A673 (cell line): ENCODE measurements at regions of chr15 and their contacts with region 1.

Region 1: DNA sequence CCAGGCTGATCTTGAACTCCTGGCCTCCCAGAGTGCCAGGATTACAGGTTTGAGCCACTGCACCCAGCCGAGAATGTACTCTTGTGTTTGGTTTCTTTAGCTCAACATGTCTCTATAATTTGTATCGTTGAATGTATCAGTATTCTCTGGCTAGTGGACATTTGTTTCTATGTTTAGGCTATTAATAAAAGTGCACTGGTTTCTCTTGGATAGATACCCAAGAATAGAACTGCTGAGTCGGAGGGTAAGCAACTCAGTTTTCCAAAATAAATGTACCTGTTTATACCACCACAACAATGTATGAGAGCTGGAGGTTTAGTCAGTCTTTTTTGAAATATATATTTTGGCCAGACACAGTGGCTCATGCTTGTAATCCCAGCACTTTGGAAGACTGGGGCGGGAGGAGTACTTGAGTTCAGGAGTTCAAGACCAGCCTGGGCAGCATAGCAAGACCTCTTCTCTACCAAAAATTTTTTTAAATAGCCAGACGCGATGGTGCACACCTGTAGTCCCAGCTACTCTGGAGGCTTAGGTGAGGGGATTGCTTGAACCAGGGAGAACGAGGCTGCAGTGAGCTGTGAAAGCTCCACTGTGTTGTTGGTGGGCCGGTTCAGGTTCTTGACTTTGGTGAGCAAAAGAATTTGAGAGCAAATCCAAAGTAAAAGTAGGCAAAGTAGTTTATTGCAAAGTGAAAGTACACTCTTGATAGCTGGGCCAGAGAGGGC is 7.7 kb upstream of the IVD start:
- DNase-seq: no peak
- H3K4me3 ChIP-seq: no peak overlapping the region
- H3K27ac ChIP-seq: no peak overlapping the region
- H3K4me1 ChIP-seq: no peaks in the 10 kb centered on the region
- H3K27me3 ChIP-seq: no peaks in the 10 kb centered on the region
- CTCF ChIP-seq: no peak

Region 2: DNA sequence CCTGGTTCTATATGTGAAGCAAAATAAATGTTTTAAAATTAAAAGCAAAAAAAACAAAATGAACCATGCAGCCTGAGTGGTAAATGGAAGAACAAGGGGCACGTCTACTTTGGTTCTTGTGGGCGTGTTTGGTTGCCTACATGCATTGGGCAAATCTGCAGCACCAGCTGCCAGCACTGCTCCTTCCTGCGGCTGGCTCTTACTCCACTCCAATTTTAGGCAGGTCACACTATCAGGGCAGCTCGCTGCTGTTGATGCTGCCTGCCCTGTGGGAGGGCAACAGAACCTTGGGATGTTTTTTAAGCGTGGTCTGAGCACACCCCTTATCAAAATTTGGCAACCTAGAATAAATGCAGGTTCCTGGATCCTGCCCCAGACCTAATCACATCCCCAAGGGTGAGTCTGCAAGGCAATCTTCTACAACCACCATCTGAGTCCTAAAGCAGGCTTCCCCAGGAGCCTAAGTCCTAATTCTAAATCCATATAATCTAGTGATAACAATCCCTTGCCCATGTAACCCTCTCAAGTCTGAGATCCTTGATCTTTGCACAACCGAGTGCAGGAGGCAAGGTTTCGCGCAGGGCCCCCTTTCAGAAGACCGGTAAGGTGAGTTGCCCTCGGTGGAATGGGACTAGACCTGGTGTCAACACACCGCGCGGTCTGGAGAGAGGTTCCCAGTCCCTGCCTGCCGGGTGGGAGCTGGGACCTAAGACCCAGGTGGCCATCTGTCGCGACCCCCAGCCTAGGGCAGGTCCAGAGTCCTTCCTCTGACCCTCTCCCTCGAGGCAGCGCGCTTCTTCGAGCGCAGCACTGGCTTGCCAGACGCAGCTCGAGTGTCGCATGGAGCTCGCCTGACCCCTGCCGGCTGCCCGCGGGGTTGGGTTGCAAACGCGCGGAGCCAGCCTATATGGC is 23.7 kb after region 1 on chr15:
- CTCF ChIA-PET with region 1: interaction called, 14 read pairs
- POLR2A ChIA-PET with region 1: no interaction called
- intact Hi-C with region 1: no loop called
- DNase-seq: peak; percentile 78
- H3K4me3 ChIP-seq: no peak overlapping the region
- H3K27ac ChIP-seq: no peak overlapping the region
- H3K4me1 ChIP-seq: no peaks in the 10 kb centered on the region
- H3K27me3 ChIP-seq: no peaks in the 10 kb centered on the region
- CTCF ChIP-seq: peak; percentile 92

Region 3: GRCh38 chr15:40456299-40456712 is 58.5 kb after region 1 on chr15:
- CTCF ChIA-PET with region 1: no interaction called
- POLR2A ChIA-PET with region 1: interaction called, 18 read pairs
- intact Hi-C with region 1: no loop called
- DNase-seq: no peak
- H3K4me3 ChIP-seq: no peak overlapping the region
- H3K27ac ChIP-seq: no peak overlapping the region
- H3K4me1 ChIP-seq: peaks cover 9% of the 10 kb centered on the region
- H3K27me3 ChIP-seq: no peaks in the 10 kb centered on the region
- CTCF ChIP-seq: no peak

Region 4: DNA sequence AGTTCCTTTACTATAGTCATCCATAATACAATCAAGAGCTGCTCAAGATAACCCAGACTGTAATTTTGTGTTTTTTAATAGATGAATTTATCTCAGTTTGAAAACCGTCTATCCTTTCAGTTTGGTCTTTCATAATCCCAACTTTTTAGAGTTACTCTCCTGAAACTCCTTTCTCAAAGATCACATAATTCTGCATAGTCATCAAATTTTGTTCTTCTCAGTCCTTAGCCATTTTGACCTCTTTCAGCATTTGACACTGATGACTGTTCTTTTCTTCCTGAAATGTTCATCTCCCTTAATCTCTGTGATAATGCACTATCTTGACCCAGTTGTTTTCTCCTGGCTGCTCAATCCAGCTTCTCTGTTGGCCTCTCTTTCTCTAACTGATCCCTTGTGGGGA is 249.7 kb after region 1 on chr15:
- CTCF ChIA-PET with region 1: no interaction called
- POLR2A ChIA-PET with region 1: no interaction called
- intact Hi-C with region 1: no loop called
- DNase-seq: no peak
- H3K4me3 ChIP-seq: no peak overlapping the region
- H3K27ac ChIP-seq: no peak overlapping the region
- H3K4me1 ChIP-seq: no peaks in the 10 kb centered on the region
- H3K27me3 ChIP-seq: no peaks in the 10 kb centered on the region
- CTCF ChIP-seq: no peak